Caco-2 (cell line): ENCODE measurements at regions of chr7 and their contacts with region 1.

Region 1: GRCh38 chr7:3218411-3219225 is 82.4 kb upstream of the SDK1 start:
- DNase-seq: peak in 1 of 2 experiments; percentile 43
- H3K4me3 ChIP-seq: no peak overlapping the region
- H3K4me3 Mint-ChIP-seq: peak overlapping the region; percentile 33
- H3K27ac Mint-ChIP-seq: peak overlapping the region; percentile 39
- H3K4me1 ChIP-seq: peaks cover 13% of the 10 kb centered on the region
- H3K4me1 Mint-ChIP-seq: peaks cover 23% of the 10 kb centered on the region
- H3K27me3 ChIP-seq: no peaks in the 10 kb centered on the region
- H3K27me3 Mint-ChIP-seq: no peaks in the 10 kb centered on the region
- CTCF ChIP-seq: no peak

Region 2: DNA sequence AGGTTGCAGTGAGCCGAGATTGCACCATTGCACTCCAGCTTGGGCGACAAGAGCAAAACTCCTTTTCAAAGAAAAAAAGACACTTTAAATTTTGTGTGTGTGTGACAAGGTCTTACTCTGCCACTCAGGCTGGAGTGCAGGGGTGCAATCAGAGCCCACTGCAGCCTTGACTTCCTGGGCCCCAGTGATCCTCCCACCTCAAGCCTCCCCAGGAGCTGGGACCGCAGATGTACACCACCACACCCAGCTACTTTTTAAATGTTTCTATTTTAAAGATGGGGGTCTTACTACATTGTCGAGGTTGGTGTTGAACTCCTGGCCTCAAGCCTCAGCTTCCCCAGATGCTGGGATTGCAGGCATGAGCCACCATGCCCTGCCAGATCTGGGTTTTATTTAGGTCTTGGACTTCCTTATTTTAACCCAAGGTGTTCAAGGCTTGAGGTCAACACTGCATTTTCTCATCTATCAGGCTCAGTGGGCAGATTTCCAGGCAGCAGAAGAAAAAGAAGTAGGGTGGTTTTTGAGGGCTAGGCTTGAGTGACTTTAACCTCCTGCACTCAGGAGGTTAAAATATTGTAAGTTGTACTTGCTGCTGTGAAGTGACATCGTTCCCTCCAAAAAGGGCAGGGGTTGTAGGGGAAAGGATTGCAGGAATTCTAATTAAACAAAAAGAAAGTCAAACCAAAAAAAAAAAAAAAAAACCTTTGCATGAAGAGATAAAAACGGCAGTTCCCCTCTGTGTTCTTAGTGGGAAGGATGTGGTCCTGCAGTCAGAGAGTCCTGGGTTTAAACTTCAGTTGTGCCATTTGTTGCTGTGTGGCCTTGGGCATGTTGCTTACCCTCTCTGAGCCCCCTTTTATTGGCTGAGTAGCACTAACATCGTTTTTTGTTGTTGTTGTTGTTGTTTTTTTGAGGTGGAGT is 246.4 kb before region 1 on chr7:
- CTCF ChIA-PET with region 1: no interaction called
- POLR2A ChIA-PET with region 1: no interaction called
- intact Hi-C with region 1: no loop called
- DNase-seq: peak in 1 of 2 experiments; percentile 3
- H3K4me3 ChIP-seq: no peak overlapping the region
- H3K4me3 Mint-ChIP-seq: no peak overlapping the region
- H3K27ac Mint-ChIP-seq: no peak overlapping the region
- H3K4me1 ChIP-seq: no peaks in the 10 kb centered on the region
- H3K4me1 Mint-ChIP-seq: no peaks in the 10 kb centered on the region
- H3K27me3 ChIP-seq: no peaks in the 10 kb centered on the region; the same call in 1 of the 2 replicates
- H3K27me3 Mint-ChIP-seq: no peaks in the 10 kb centered on the region
- CTCF ChIP-seq: no peak

Region 3: DNA sequence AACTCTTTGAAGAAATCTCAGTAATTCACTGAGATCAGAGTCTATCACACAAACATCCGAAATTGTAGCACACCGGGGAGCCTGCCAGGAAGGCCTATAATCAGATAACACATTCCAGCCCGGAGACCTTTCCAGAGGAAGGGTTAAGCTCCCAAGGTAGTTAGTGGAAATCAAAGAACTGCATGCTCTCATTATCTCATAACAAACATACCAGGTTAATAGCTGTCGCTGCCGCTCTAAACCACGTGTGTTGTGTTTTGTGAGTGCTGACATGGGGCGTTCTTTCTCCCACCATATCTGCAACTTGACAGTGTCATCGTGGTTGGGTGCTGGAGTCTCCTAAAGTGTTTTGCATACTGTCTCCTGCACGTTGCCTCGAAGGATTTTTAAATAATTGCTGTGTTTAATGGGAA is 54.2 kb before region 1 on chr7:
- CTCF ChIA-PET with region 1: no interaction called
- POLR2A ChIA-PET with region 1: no interaction called
- intact Hi-C with region 1: loop called (anchors 1 kb)
- DNase-seq: peak; percentile 80 to 88
- H3K4me3 ChIP-seq: no peak overlapping the region
- H3K4me3 Mint-ChIP-seq: peak overlapping the region; percentile 51
- H3K27ac Mint-ChIP-seq: peak overlapping the region; percentile 86
- H3K4me1 ChIP-seq: peaks cover 25% of the 10 kb centered on the region
- H3K4me1 Mint-ChIP-seq: peaks cover 10% of the 10 kb centered on the region
- H3K27me3 ChIP-seq: no peaks in the 10 kb centered on the region
- H3K27me3 Mint-ChIP-seq: no peaks in the 10 kb centered on the region
- CTCF ChIP-seq: no peak

Region 4: GRCh38 chr7:3260401-3260715 is 41.7 kb after region 1 on chr7:
- CTCF ChIA-PET with region 1: no interaction called
- POLR2A ChIA-PET with region 1: no interaction called
- intact Hi-C with region 1: loop called (anchors 5 kb)
- DNase-seq: no peak
- H3K4me3 ChIP-seq: no peak overlapping the region
- H3K4me3 Mint-ChIP-seq: peak overlapping the region; percentile 65
- H3K27ac Mint-ChIP-seq: peak overlapping the region; percentile 76
- H3K4me1 ChIP-seq: peaks cover 26% of the 10 kb centered on the region
- H3K4me1 Mint-ChIP-seq: peaks cover 26% of the 10 kb centered on the region
- H3K27me3 ChIP-seq: no peaks in the 10 kb centered on the region
- H3K27me3 Mint-ChIP-seq: peaks cover 7% of the 10 kb centered on the region
- CTCF ChIP-seq: no peak